Left ventricle myocardium superior (tissue), 1 donor: ENCODE measurements at regions of chr9 and their contacts with region 1.

Region 1: DNA sequence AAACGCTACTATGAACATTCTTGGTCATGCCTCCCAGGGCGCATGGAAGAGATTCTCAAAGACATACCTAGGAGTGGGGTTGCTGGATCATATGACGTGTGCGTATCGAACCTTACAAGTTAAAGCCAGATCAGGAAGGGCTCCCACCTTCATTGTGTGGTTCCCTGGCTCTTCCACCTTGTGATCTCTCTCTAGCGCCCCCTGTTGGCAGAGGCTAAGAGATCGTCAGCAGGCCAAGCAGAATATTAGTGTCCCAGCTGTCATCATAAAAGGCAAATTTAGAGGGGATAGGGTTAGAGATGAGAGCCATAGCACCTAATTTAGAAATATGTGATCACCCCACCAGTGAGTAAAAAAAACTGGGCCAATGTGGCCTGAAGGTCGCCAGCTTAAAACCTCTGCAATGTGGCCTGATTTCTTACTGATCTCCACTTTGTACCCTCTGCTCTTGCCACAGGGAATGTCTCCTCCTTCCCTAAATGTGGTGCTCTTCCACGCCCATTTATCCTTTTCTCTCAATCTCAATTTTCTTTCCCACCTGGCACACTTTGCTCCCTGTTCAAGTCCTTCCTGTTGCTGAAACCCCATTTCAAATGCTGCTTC is 91.7 kb upstream of the SHB start:
- DNase-seq: peak; percentile 51
- ATAC-seq: peak; percentile 65

Region 2: DNA sequence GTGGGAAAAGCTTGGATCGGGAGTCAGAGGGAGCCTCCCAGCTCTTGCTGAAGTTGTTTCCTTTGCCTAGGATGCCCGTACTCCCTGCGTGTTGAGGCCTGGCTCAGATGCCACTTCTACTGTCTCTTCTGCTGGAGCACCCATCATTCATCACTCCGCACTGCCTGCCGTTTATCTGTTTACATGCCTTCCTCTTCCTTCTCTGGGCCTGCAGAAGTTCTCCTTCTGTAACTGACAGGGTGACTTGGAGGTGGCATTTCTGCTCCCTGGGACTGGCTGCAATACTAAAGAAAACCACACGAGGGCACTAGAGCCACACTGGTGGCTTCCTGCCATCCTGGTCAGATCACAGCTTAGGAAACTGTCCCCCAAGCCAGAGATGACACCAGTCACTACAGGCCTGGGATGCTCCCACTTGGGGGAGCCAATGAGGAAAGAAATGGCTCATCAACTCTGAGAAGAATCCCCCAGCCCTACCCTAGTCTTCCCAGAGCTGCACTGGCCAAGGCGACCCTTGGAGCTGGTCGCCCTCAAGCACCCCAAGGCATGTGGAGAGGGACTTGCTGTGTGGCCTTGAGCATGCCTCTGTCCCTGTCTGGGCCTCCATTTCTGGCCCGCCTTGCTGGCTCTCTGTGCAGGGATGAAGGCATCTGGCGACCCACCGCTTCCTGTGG is 247.1 kb before region 1 on chr9:
- intact Hi-C with region 1: loop called (anchors 5 kb)
- DNase-seq: peak; percentile 78
- ATAC-seq: peak; percentile 87

Region 3: DNA sequence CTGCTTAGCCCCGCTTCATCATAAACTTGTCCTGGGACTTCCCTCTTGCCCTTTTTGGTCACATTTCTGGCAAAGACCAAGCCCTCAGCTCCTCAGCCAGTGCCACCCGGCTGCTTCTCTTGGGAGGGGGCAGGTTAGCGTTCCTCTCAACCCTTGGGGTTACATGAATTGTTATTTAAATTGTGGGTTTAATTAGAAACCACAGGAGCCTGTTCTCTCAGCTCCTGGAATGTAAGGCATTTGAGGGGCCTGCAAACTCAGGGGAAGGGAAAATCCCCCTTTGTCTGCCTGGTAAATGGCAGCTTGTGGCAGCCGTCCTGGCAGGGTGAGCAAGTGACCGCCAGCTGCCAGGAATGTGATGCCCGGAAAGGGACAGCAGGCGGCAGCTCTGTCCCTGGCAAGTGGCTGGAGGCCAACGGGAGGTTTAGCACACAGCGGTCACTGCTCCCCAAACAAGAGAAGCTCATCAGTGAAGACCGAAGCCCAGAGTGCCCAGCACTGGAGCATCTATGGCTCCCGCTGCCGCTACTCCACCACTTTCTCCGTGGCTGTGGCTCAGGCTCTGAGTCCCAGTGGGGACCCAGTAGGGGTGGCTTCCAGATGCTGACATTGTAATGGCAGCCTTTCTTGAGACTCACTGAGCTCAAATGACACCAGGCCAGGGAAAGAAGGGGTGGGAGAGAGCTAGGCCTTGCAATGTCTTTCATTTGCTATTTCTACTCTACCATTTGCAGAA is 143.4 kb before region 1 on chr9:
- intact Hi-C with region 1: loop called (anchors 10 kb)
- DNase-seq: peak; percentile 84
- ATAC-seq: peak; percentile 88

Region 4: GRCh38 chr9:38107811-38108304 is 52.9 kb before region 1 on chr9:
- intact Hi-C with region 1: loop called (anchors 10 kb)
- DNase-seq: no peak
- ATAC-seq: no peak